Common myeloid progenitor, CD34-positive (primary cell): ENCODE measurements at regions of chr7 and their contacts with region 1.

Region 1: DNA sequence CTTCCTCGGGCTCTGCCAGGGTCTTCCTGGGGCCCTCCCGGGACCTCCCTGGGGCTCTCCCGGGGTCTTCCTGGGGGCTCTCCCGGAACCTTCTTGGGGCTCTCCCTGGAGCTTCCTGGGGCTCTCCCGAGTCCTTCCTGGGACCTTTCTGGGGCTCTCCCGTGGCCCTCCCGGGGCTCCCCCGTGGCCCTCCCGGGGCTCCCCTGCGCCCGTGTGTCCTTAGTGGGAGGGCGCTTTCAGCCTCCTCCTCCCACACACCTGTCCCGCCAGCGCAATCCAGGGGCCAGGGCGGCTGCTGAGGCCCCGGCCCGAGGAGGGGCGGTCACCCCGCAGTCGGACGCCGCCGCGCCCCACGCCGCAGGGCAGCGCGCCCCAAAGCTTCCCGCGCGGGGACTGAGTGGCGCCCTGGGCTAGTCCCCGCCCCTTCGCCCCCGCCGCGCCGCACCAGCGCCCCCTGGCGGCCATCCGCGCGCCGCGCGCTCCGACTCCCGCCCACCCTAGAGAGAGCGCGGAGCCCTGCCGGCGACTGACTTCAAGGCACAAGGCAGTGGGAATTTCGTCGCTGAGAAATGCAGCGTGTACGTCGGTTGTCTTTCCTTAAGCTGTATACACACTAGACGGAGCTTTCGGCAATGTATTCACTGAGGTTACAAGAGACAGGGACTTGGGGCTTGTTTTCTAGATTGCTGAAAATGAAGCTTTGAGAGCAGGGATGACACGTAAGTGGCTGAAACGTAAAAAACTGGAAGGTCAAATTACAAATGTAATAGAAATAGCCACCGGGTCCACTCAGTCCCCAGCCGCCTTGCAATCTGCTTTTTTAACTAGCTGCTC is 47.1 kb downstream of the INSIG1 start:
- DNase-seq: peak; percentile 75 to 87 (median 86)
- H3K4me3 ChIP-seq: peak overlapping the region in 6 of 7 experiments; percentile 24 to 72 (median 56)
- H3K27ac ChIP-seq: no peak overlapping the region
- H3K4me1 ChIP-seq: peaks cover 0 to 10% (median 9%) of the 10 kb centered on the region in 4 experiments
- H3K27me3 ChIP-seq: peaks cover 0 to 23% (median 2%) of the 10 kb centered on the region in 5 experiments

Region 2: DNA sequence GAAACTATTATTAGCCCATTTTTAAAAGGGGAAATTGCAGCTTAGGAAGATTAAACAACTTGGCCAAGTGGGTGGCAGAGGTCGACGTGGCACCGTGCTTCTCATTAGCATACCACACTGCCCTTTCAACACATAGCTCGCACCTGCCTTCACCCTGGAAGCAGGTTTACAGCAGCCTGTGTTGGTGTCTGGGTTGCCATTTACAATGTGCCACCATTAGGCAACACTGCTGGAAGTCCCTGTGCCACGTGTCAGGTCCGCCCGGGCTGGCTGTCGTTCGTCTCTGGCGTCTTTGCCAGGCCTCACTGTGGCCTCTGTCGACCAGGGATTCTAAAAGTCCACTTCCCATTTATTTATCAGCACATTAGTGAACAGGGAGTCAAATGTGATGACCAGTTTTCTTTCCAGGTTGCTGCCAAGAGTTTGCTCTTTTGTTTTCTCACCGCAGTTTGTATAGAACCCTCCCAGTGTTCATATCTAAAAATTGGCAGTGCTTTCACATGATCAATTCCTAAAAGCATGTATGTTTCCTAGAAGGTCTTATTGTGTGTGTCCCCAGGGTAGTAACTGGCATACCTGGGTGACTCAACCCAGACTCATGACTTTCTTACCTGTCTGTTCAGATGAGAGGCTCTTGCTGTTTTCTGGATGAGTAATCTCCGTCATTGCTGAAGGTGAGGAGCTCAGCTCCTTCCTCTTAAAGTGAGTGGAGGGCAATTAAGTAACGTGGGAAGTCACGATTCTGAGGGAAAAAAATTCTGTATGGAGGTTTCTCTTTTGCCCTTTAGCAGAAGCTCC is 37.9 kb before region 1 on chr7:
- CTCF ChIA-PET with region 1: interaction called, 10 read pairs
- POLR2A ChIA-PET with region 1: no interaction called
- DNase-seq: no peak
- H3K4me3 ChIP-seq: no peak overlapping the region
- H3K27ac ChIP-seq: no peak overlapping the region
- H3K4me1 ChIP-seq: peaks cover 0 to 10% (median 5%) of the 10 kb centered on the region in 4 experiments
- H3K27me3 ChIP-seq: no peaks in the 10 kb centered on the region

Region 3: GRCh38 chr7:155317114-155317434 is 27.7 kb before region 1 on chr7:
- CTCF ChIA-PET with region 1: no interaction called
- POLR2A ChIA-PET with region 1: no interaction called
- DNase-seq: no peak
- H3K4me3 ChIP-seq: no peak overlapping the region
- H3K27ac ChIP-seq: no peak overlapping the region
- H3K4me1 ChIP-seq: no peaks in the 10 kb centered on the region
- H3K27me3 ChIP-seq: peaks cover 0 to 3% (median 0%) of the 10 kb centered on the region in 5 experiments

Region 4: GRCh38 chr7:155356323-155357105 is 11.7 kb after region 1 on chr7:
- CTCF ChIA-PET with region 1: interaction called, 11 read pairs
- POLR2A ChIA-PET with region 1: no interaction called
- DNase-seq: peak in 1 of 3 donors; percentile 40
- H3K4me3 ChIP-seq: no peak overlapping the region
- H3K27ac ChIP-seq: no peak overlapping the region
- H3K4me1 ChIP-seq: peaks cover 0 to 30% (median 10%) of the 10 kb centered on the region in 4 experiments
- H3K27me3 ChIP-seq: peaks cover 0 to 46% (median 0%) of the 10 kb centered on the region in 5 experiments